Tibial artery (tissue), 4 donors: ENCODE measurements at regions of chr1 and their contacts with region 1.

Region 1: GRCh38 chr1:110630839-110631663 is 24.9 kb upstream of the KCNA2 start:
- DNase-seq: peak in 1 of 2 donors; percentile 60
- H3K4me3 ChIP-seq: no peak overlapping the region
- H3K27ac ChIP-seq: no peak overlapping the region
- H3K4me1 ChIP-seq: peaks cover 0 to 17% (median 13%) of the 10 kb centered on the region in 4 donors
- H3K27me3 ChIP-seq: peaks cover 0 to 2% of the 10 kb centered on the region in 2 donors
- CTCF ChIP-seq: peak; percentile 72 to 77

Region 2: DNA sequence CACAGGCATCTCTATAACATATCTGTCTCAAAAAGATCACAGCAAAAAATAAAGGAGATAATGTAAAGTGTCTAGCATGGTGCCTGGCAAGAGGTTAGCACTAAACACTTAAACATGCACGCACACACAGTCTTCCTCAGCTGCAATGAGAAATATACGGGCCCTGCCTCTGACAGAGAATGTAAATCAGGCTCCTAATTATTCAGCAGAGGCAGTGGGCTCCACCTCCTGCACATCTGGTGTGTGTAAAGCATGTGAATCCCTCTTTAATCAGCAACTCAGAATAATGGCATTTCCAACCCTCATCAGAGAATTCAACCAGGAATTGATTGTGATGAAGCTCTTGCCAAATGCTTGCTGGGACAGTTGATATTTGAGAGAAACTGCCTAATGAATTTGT is 129.3 kb after region 1 on chr1:
- intact Hi-C with region 1: loop called (anchors 5 kb)
- DNase-seq: no peak
- H3K4me3 ChIP-seq: no peak overlapping the region
- H3K27ac ChIP-seq: no peak overlapping the region
- H3K4me1 ChIP-seq: no peaks in the 10 kb centered on the region
- H3K27me3 ChIP-seq: peaks cover 0 to 16% of the 10 kb centered on the region in 2 donors
- CTCF ChIP-seq: no peak